MCF 10A (cell line): ENCODE measurements at regions of chr13 and their contacts with region 1.

Region 1: DNA sequence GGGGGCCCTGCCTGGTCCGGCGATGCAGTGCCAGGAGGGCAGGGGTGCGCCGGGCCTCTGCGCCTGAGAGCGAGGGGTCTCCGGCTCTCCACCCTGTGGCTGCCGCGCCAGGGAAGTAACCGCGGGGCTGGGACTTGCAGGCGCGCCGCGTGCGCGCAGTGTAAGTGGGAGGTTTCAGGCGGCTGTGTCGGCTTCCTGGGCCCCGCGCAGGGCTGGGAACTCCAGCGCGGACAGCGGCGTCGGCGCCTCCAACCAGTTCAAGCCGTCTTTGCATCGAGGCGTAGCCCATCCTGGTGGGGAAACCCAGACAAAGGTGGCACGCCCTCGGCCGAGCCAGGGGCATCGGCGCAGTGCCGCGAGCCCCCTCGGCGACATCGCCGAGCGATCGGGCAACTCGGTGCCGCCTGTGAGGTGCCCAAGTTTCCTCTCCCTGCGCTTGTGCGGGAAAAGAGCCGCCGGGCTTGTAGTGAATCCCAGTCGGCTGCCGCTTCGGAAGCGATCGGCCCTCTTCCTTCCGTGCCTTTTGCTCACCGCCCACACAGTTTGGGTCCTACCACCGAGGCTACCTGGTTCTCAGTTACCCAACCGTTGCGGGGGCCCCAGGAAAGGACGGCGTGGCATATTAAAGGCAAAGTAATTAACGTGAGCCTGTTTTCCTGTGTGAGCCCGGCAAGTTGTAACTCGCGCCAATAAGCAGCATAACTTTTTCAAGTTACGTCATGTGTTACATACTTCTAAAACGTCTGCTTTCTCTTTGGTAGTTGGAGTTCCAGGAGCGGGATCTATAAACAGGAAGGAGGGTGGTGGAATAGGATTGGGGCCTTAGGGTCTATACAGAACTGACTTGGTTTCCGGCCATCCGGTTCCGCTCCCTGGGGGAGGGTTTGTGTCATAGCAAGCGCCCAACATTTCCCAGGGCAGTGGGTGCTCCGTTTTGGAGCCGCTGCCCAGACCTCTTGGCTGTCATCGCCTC is 1.2 kb downstream of the LRCH1 start:
- DNase-seq: peak; percentile 81
- H3K4me3 Mint-ChIP-seq: peak overlapping the region; percentile 74
- H3K27ac Mint-ChIP-seq: peak overlapping the region; percentile 82
- H3K4me1 Mint-ChIP-seq: peaks cover 28% of the 10 kb centered on the region
- H3K27me3 Mint-ChIP-seq: no peaks in the 10 kb centered on the region
- CTCF ChIP-seq: no peak

Region 2: GRCh38 chr13:46481166-46481565 is 73.0 kb before region 1 on chr13:
- CTCF ChIA-PET with region 1: no interaction called
- POLR2A ChIA-PET with region 1: no interaction called
- intact Hi-C with region 1: no loop called
- DNase-seq: no peak
- H3K4me3 Mint-ChIP-seq: no peak overlapping the region
- H3K27ac Mint-ChIP-seq: no peak overlapping the region
- H3K4me1 Mint-ChIP-seq: no peaks in the 10 kb centered on the region
- H3K27me3 Mint-ChIP-seq: peaks cover 36% of the 10 kb centered on the region
- CTCF ChIP-seq: no peak

Region 3: GRCh38 chr13:46492946-46493345 is 61.2 kb before region 1 on chr13:
- CTCF ChIA-PET with region 1: interaction called, 9 read pairs
- POLR2A ChIA-PET with region 1: interaction called, 3 read pairs
- intact Hi-C with region 1: loop called (anchors 2 kb)
- DNase-seq: peak; percentile 55
- H3K4me3 Mint-ChIP-seq: no peak overlapping the region
- H3K27ac Mint-ChIP-seq: no peak overlapping the region
- H3K4me1 Mint-ChIP-seq: peaks cover 7% of the 10 kb centered on the region
- H3K27me3 Mint-ChIP-seq: peaks cover 42% of the 10 kb centered on the region
- CTCF ChIP-seq: peak; percentile 59

Region 4: DNA sequence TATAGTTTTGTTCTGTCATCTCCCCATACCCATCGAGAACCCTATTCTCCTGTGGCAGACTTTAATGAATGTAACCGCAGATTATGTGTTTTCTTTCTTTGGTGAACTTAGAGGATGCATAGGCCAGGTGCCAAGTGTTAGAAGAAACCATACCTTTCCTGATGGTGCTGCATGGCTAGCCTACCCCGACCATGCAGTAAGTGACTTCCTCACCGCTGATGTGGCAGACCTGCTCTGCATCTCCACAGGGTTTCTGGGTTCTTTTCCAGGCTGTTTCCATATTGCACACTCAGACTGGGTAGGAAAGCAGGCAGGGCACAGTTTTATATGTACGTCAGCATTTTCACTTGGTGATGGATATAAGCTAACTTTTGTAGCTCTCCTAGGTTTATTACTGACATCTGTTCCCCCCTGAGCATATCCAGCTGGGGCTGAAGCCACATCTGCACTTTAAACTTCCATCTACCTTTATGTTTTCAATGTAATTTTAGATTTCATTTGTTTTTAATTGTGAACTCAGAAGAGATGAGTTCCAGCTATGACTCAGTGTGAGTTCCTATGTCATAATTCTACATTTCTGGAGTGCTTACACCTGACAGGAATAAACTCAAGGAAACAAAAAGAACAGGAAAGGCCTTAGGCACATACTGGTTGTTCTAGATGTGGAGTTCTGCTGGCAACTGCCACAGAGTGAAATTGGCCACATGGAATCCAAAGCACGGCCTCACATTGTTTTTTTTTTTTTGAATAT is 41.1 kb after region 1 on chr13:
- CTCF ChIA-PET with region 1: interaction called, 5 read pairs
- POLR2A ChIA-PET with region 1: interaction called, 40 read pairs
- intact Hi-C with region 1: loop called (anchors 2 kb)
- DNase-seq: peak; percentile 87
- H3K4me3 Mint-ChIP-seq: peak overlapping the region; percentile 69
- H3K27ac Mint-ChIP-seq: peak overlapping the region; percentile 86
- H3K4me1 Mint-ChIP-seq: peaks cover 42% of the 10 kb centered on the region
- H3K27me3 Mint-ChIP-seq: no peaks in the 10 kb centered on the region
- CTCF ChIP-seq: no peak

Region 5: GRCh38 chr13:46614582-46614981 is 60.4 kb after region 1 on chr13:
- CTCF ChIA-PET with region 1: interaction called, 7 read pairs
- POLR2A ChIA-PET with region 1: interaction called, 7 read pairs
- intact Hi-C with region 1: loop called (anchors 2 kb)
- DNase-seq: peak; percentile 76
- H3K4me3 Mint-ChIP-seq: no peak overlapping the region
- H3K27ac Mint-ChIP-seq: peak overlapping the region; percentile 47
- H3K4me1 Mint-ChIP-seq: peaks cover 40% of the 10 kb centered on the region
- H3K27me3 Mint-ChIP-seq: no peaks in the 10 kb centered on the region
- CTCF ChIP-seq: no peak

Region 6: GRCh38 chr13:46721054-46721453 is 166.9 kb after region 1 on chr13:
- CTCF ChIA-PET with region 1: interaction called, 57 read pairs
- POLR2A ChIA-PET with region 1: interaction called, 10 read pairs
- intact Hi-C with region 1: loop called (anchors 1 kb)
- DNase-seq: peak; percentile 65
- H3K4me3 Mint-ChIP-seq: no peak overlapping the region
- H3K27ac Mint-ChIP-seq: no peak overlapping the region
- H3K4me1 Mint-ChIP-seq: no peaks in the 10 kb centered on the region
- H3K27me3 Mint-ChIP-seq: no peaks in the 10 kb centered on the region
- CTCF ChIP-seq: peak; percentile 73